Activated CD4-positive, alpha-beta memory T cell treated with anti-CD3 and anti-CD28 coated beads for 36 hours (primary cell): ENCODE measurements at regions of chr14 and their contacts with region 1.

Region 1: DNA sequence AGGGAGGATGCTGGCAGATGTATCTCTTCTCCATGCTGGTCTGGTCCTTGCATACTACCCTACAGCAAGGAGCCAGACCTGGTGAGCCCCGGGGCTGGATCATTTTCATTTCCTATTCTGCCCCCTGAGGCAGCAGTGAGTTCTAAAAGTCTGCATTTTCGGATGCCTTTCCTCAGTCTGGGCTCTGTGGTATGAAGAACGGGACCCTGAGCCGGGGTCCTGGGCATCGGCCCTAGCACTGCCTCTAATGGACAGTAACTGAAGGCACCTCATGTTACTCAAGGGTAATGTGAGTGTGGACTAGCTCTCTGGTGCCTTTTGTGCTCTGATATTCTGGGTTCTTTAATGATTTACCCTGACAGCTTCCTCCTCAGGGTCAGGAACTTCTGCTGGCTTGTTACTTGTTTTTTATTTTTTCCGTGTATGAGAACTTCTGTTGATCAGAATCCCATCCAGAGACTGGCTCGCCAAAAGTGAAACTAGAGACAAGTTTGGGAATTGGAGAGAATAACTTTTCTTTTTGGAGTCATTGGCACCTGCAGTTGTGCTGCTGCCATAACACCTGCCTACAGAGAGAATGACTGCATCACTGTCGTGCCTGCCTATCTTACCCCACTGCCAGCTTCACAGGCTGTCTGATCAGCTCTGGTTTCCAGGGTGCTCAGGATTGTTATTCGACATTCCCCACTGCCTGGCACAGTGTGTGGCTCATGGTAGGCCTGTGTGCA is 62.3 kb downstream of the SUSD6 start:
- DNase-seq: no peak
- H3K4me3 Mint-ChIP-seq: peak overlapping the region; percentile 61
- H3K27ac Mint-ChIP-seq: peak overlapping the region; percentile 97
- H3K4me1 Mint-ChIP-seq: peaks cover 91% of the 10 kb centered on the region
- H3K27me3 Mint-ChIP-seq: no peaks in the 10 kb centered on the region

Region 2: DNA sequence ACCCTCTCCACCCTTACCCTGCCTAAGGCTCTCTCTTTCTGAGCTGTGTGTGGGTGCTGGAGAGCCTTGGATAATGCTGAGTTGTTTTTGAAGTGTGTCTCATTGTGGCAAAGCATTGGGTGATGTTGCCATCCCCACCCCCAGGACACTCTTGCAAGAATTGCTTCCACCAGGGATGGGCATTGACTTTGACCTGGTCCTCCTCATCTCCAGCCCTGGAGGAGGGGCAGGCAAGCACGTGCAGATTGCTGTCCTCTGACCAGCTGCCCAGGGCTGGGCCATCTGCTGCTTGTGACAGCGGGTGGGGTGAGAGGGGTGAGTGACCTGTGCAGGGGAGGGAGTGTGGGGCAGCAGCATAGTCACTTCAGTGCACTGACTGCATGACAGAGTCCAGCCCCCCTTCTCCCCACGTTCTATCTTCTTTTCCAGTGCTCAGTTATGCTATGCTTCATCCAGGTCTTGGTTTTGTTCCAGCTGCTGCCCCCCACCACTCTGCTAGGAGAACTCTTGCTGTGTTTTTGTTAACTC is 36.2 kb before region 1 on chr14:
- CTCF ChIA-PET with region 1: interaction called, 4 read pairs
- POLR2A ChIA-PET with region 1: interaction called, 24 read pairs
- intact Hi-C with region 1: loop called (anchors 1 kb)
- DNase-seq: peak; percentile 58
- H3K4me3 Mint-ChIP-seq: peak overlapping the region; percentile 54
- H3K27ac Mint-ChIP-seq: peak overlapping the region; percentile 94
- H3K4me1 Mint-ChIP-seq: peaks cover 92% of the 10 kb centered on the region
- H3K27me3 Mint-ChIP-seq: no peaks in the 10 kb centered on the region

Region 3: DNA sequence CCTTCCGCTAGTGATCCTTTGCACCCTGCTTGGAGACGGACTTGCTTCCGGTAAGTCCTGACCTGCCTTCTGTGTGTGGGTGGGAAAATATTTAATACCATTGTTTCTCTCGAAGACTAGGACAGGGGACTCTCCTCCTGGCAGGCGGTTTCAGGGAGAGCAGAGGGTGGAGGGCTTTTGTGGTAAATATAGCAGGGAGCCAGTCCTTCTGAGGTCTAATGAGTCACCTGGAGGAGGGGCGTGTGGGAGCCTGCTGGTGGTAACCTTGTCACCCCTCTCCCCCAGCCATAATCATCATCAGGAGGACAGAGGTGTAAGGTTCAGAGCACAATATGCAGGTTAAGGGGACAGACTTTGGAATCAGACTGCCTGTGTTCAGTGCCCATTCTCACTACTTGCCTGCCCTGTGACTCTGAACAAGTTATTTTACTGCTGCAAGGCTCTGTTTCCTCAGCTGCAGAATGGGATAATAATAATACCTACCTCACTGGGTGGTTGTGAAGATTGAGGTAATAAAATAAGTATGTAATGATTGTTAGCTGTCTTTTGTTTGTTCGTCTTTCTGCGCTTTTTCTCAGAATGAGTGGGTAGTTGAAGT is 15.0 kb before region 1 on chr14:
- CTCF ChIA-PET with region 1: interaction called, 5 read pairs
- POLR2A ChIA-PET with region 1: interaction called, 8 read pairs
- intact Hi-C with region 1: loop called (anchors 1 kb)
- DNase-seq: peak; percentile 61
- H3K4me3 Mint-ChIP-seq: no peak overlapping the region
- H3K27ac Mint-ChIP-seq: peak overlapping the region; percentile 83
- H3K4me1 Mint-ChIP-seq: peaks cover 93% of the 10 kb centered on the region
- H3K27me3 Mint-ChIP-seq: no peaks in the 10 kb centered on the region

Region 4: GRCh38 chr14:69715725-69716477 is 42.2 kb after region 1 on chr14:
- CTCF ChIA-PET with region 1: no interaction called
- POLR2A ChIA-PET with region 1: interaction called, 5 read pairs
- intact Hi-C with region 1: loop called (anchors 2 kb)
- DNase-seq: no peak
- H3K4me3 Mint-ChIP-seq: no peak overlapping the region
- H3K27ac Mint-ChIP-seq: peak overlapping the region; percentile 87
- H3K4me1 Mint-ChIP-seq: peaks cover 47% of the 10 kb centered on the region
- H3K27me3 Mint-ChIP-seq: no peaks in the 10 kb centered on the region